Pancreas (tissue), 10 donors: ENCODE measurements at regions of chr7 and their contacts with region 1.

Region 1: DNA sequence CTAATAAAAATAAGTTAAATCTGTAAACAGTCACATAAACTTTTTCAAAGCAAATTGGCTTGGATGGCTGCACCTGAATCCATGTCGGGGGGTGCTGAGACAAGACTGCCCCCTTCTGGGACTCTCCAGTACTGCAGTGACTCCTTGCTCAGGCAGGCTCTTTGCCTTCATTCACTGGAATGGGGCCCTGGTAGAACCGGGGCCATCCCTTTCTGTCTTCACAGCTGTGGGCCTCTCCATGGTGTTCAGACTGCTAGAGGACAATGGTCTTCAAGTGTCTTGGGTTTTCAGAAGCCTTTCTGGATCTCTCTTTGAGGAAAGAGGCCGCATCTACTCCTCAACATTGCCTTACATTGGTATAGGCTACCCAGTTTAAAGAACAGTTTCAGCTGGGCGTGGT is 16.1 kb upstream of the IMPDH1 start:
- DNase-seq: peak in 5 of 6 donors; percentile 23 to 83 (median 53)
- ATAC-seq: peak; percentile 65 to 88 (median 80)
- H3K4me3 ChIP-seq: no peak overlapping the region
- H3K27ac ChIP-seq: no peak overlapping the region
- H3K4me1 ChIP-seq: no peaks in the 10 kb centered on the region
- H3K27me3 ChIP-seq: no peaks in the 10 kb centered on the region
- CTCF ChIP-seq: peak; percentile 60 to 81 (median 74)

Region 2: DNA sequence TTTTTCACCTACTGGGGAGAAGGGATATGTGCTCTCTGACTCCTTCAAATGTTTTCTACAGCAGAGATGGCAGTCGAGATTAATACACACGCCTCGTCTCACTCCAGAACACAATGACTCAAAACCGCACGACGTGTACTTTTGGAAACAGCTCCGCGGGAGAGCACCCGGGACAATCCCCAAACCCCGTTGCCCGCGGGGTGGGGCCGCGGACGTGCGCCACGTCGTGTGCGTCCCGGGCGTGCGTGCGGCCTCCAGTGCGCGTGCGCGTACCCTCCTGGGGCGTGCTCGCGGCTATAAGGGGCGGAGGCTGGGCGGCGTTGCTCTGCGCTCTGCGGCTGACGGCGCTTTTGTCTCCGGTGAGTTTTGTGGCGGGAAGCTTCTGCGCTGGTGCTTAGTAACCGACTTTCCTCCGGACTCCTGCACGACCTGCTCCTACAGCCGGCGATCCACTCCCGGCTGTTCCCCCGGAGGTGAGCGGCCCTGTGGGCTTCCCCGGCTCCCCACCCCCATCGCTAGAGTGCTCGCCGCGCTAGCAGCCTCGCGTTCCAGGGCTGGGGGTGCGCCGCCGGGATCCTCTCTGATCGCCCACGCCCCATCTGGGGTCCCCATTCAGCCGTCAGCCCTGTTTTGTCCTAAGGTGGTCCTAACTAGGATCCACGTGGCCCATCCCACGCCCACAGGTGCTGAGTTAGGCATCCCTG is 29.9 kb after region 1 on chr7 and contains the start of gene HILPDA:
- intact Hi-C with region 1: loop called in 2 of 3 experiments (anchors 2 to 5 kb)
- DNase-seq: peak; percentile 90 to 98 (median 94)
- ATAC-seq: peak; percentile 84 to 94 (median 93)
- H3K4me3 ChIP-seq: peak within 1 kb of the TSS; percentile 74 to 99 (median 86)
- H3K27ac ChIP-seq: peak within 1 kb of the TSS; percentile 77 to 94 (median 88)
- H3K4me1 ChIP-seq: peaks cover 25 to 36% (median 30%) of the 10 kb centered on the region in 3 donors
- H3K27me3 ChIP-seq: no peaks in the 10 kb centered on the region
- CTCF ChIP-seq: no peak
- total RNA-seq, gene HILPDA: 2.0 to 7.4 (median 4.2) TPM